ENCODE measurements at regions of chrX and their contacts with region 1.

Region 1: GRCh38 chrX:47193475-47194193 is at the start of gene UBA1:
- DNase-seq: peak; percentile 96
- H3K4me3 ChIP-seq: peak within 1 kb of the TSS; percentile 69 to 78
- H3K27ac ChIP-seq: peak within 1 kb of the TSS; percentile 94 to 97
- H3K4me1 ChIP-seq: peaks cover 2% of the 10 kb centered on the region
- H3K27me3 ChIP-seq: no peaks in the 10 kb centered on the region
- CTCF ChIP-seq: peak; percentile 69 to 94 (median 94)
- POLR2A ChIP-seq: peak; percentile 48
- total RNA-seq, gene UBA1: 243 to 338 TPM

Region 2: DNA sequence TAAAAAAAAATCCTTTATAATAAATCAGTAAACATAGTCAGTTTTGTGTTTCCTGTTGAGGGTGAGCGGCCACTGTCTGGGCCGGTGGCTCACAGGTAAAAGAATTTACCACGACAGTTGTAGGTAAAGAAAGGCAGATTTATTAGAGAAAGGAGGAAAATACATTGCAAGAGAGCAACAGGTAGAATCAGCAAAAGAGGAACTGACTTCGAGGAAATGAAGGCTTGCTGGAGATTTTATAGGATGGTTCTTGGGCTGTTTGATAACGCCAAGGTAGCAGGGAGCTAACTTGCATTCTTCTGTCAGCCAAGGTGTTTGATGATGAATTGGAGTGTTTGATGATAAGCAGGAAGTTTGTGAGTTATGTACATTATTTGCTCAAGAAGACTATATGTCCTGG is 179.6 kb after region 1 on chrX:
- intact Hi-C with region 1: loop called (anchors 10 kb)
- DNase-seq: no peak
- H3K4me3 ChIP-seq: no peak overlapping the region
- H3K27ac ChIP-seq: no peak overlapping the region
- H3K4me1 ChIP-seq: no peaks in the 10 kb centered on the region
- H3K27me3 ChIP-seq: no peaks in the 10 kb centered on the region
- CTCF ChIP-seq: no peak
- POLR2A ChIP-seq: no peak

Region 3: DNA sequence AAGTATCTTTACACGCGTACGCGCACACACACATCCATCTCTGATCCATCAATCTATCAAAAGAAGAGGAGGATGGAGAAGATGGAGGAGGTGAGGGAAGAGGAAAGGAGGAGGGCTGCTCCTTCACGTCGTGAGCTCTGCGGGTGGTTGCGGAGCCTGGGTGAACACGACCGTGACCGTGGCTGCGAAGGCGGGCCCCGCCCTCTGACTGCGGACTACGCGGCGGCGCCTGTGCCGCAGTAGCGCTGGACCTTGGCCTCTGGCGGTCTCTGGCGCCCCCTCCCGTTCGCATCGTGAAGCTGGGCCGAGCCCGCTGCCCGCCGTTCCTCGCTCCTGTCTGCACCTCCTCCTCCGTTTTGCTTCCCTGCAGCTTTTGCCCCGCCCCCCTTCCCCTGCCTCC is 329.7 kb after region 1 on chrX:
- intact Hi-C with region 1: loop called (anchors 10 kb)
- DNase-seq: peak; percentile 85
- H3K4me3 ChIP-seq: peak overlapping the region; percentile 40 to 56
- H3K27ac ChIP-seq: peak overlapping the region in 1 of 2 donors; percentile 63
- H3K4me1 ChIP-seq: no peaks in the 10 kb centered on the region
- H3K27me3 ChIP-seq: no peaks in the 10 kb centered on the region
- CTCF ChIP-seq: peak; percentile 59 to 72 (median 69)
- POLR2A ChIP-seq: no peak

Measured in testis (tissue), 5 donors.